ENCODE measurements at regions of chr2 and their contacts with region 1.

Region 1: DNA sequence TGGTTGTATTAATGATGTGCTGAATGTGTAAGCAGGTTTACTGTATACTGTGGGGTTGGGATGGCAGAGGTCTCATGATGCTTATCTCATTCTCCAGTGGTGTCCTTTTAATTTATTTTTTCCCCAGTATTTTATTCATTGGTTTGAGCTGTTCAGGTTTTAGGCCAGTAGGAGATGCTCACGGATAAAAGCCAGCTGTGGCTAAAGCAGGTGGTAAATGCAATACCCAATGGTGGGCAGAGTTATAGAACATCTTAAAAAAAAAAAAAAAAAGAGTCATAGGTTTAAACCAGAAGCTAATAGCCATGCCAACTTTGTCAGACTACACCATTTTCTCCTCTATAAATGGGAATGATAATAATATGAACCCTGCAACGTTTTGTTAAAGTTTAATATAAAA is 57.8 kb upstream of the NEUROD1 start:
- DNase-seq: no peak
- H3K4me3 ChIP-seq: no peak overlapping the region
- H3K27ac ChIP-seq: no peak overlapping the region
- H3K4me1 ChIP-seq: no peaks in the 10 kb centered on the region
- H3K27me3 ChIP-seq: no peaks in the 10 kb centered on the region
- CTCF ChIP-seq: peak in 1 of 3 experiments; percentile 5

Region 2: DNA sequence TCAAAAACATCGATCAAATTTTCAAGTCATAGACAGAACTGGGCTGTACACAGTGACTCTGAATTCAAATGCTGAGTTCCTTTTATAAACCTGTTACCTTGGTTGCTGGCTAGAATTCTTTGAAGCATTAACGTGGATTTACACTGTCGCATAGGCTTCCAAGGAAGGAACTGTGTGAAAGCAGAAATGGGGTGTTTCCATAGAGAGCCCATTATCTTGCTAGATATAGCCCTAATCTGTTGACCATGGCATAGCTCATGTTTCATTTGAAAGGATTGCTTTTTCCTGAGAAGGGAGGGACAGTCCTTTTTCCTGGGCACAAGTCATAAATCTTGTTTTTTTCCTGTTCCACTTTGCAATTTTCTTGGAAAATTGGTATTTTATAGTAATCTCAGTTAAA is 16.0 kb after region 1 on chr2:
- intact Hi-C with region 1: loop called (anchors 1 kb)
- DNase-seq: no peak
- H3K4me3 ChIP-seq: no peak overlapping the region
- H3K27ac ChIP-seq: no peak overlapping the region
- H3K4me1 ChIP-seq: no peaks in the 10 kb centered on the region
- H3K27me3 ChIP-seq: no peaks in the 10 kb centered on the region
- CTCF ChIP-seq: no peak

Region 3: DNA sequence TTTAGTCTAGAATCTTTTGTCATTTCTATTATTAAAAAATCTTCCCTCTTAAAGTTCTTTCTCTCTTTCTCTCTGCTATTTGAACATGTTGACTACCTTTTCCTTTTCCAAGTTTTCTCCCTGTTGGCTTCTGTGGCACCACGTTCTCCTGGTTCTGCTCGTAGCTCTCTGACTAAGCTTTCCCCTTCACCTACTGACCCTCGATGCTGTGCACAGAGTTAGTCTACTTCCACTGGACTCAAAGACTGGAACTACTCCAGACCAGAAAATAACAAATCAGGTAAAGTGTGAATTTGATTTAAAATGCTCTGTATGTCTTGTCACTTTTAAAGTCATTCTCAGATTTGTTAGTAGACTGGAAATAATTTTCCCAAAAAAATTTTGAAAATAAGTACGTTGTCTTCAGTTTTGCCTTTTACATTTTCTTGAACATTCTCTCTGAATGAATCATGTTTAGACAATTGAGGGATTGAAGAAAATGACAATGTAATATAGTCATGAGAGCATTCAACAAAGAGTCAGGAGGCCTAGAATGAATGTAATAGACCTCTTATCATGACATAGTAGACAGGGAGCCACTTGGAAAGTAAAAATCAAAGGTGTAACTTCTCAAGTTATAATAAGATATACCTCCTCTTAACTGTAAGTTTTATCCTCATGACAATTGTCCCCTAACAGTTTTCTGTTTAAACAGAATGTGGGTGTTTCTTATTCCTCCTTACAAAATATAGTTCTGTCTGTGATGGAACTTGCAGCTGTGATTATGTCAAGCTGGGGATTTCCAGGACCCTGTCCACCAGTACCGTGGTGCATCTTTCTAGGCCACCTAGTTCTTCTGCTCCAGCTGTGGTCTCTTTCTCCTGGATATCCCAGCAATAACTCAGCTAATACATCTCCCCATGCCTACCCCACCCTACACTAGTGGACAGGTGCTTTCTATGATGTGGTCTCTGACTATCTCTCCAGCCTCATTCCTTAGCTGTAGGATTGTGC is 178.9 kb after region 1 on chr2:
- intact Hi-C with region 1: no loop called
- DNase-seq: no peak
- H3K4me3 ChIP-seq: no peak overlapping the region
- H3K27ac ChIP-seq: no peak overlapping the region
- H3K4me1 ChIP-seq: no peaks in the 10 kb centered on the region
- H3K27me3 ChIP-seq: no peaks in the 10 kb centered on the region
- CTCF ChIP-seq: no peak

Measured in ascending aorta (tissue), 2 donors.